CD14-positive monocyte (primary cell): ENCODE measurements at regions of chr1 and their contacts with region 1.

Region 1: DNA sequence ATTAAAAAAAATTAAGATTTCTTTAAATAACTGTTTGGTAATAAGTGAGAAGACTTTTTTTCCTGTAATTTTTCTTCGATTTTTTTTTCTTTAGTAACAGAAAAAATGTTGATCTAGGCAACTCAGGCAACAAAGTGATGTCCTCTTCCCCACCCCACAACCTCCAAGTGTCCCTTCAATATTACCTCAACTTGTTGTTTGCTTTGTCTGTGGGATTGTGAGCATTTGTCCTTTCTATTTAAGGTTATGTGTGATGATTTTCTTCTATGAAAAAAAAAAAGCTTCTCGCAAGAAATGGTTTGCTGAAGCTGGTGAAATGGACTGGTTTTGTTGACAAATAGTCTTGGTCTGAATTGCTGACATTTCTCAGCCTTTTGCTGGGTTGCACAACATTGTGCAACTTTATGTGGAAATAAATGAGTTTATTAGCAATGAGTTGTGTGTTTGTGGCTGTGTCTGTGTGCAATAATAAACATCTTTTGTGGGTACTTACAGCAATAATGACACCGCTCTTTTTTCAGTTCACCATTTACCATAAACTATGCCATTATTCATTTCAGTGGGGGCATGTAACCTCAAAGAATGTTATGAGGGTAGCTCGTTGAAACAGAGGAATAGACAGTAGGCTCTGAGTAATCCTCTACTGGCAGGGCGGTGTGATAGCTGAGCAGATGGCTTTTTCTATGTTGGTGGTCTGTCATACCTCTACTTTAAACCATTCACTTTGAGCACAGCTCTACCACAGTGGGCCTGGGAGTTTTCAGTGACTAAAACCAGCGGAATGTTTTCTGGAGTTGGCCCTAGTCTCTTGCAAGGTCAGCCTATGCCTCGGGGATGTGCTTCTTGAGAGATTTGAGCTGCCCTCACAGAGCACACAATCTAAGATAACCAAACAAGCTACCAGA is 218.5 kb downstream of the HLX start:
- DNase-seq: peak; percentile 95 to 98 (median 97)
- H3K4me3 ChIP-seq: peak overlapping the region in 1 of 3 experiments; percentile 28
- H3K4me3 Mint-ChIP-seq: peak overlapping the region in 1 of 2 donors; percentile 72
- H3K27ac ChIP-seq: peak overlapping the region; percentile 86 to 88
- H3K27ac Mint-ChIP-seq: peak overlapping the region; percentile 88 to 100 (median 98)
- H3K4me1 ChIP-seq: peaks cover 57 to 68% of the 10 kb centered on the region in 2 donors
- H3K4me1 Mint-ChIP-seq: peaks cover 69% of the 10 kb centered on the region
- H3K27me3 ChIP-seq: no peaks in the 10 kb centered on the region
- H3K27me3 Mint-ChIP-seq: peaks cover 4 to 11% (median 9%) of the 10 kb centered on the region in 3 donors
- CTCF ChIP-seq: no peak

Region 2: DNA sequence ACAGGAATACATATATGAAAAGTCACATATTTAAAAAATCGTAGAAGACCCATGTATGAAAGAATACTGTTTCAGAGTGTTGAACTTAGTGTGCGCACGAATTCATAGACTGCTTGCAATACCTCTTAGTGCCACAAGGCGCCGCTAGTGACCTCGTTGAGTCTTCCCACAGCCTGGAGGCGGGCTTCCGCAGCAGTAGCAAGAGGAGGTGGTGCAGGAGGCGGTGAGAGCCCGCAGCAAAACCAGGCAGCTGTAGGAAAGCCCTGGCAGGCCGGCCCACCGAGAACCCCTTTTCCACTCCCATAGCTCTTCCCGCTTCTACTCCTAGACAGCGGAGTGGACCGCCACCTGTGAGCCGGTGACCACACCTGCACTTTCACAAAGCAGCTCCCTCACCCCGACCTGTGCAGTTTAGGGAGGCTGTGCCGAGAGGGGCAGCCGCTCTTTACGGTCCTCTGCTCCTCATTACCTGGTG is 287.5 kb before region 1 on chr1:
- intact Hi-C with region 1: no loop called
- DNase-seq: peak; percentile 58 to 72 (median 67)
- H3K4me3 ChIP-seq: no peak overlapping the region
- H3K4me3 Mint-ChIP-seq: peak overlapping the region; percentile 21 to 41
- H3K27ac ChIP-seq: no peak overlapping the region
- H3K27ac Mint-ChIP-seq: peak overlapping the region in 1 of 7 donors; percentile 27
- H3K4me1 ChIP-seq: no peaks in the 10 kb centered on the region
- H3K4me1 Mint-ChIP-seq: peaks cover 5% of the 10 kb centered on the region
- H3K27me3 ChIP-seq: no peaks in the 10 kb centered on the region
- H3K27me3 Mint-ChIP-seq: peaks cover 0 to 2% (median 0%) of the 10 kb centered on the region in 3 donors
- CTCF ChIP-seq: peak; percentile 99

Region 3: GRCh38 chr1:220879076-220879508 is 218.6 kb before region 1 on chr1 and contains the start of gene HLX:
- intact Hi-C with region 1: loop called (anchors 2 to 5 kb)
- DNase-seq: peak; percentile 85 to 87 (median 86)
- H3K4me3 ChIP-seq: peak within 1 kb of the TSS; percentile 72 to 92 (median 81)
- H3K4me3 Mint-ChIP-seq: peak within 1 kb of the TSS; percentile 99
- H3K27ac ChIP-seq: peak within 1 kb of the TSS; percentile 84 to 91
- H3K27ac Mint-ChIP-seq: peak within 1 kb of the TSS; percentile 93 to 99 (median 97)
- H3K4me1 ChIP-seq: peaks cover 62% of the 10 kb centered on the region in 2 donors
- H3K4me1 Mint-ChIP-seq: peaks cover 69% of the 10 kb centered on the region
- H3K27me3 ChIP-seq: no peaks in the 10 kb centered on the region
- H3K27me3 Mint-ChIP-seq: peaks cover 0 to 9% (median 2%) of the 10 kb centered on the region in 3 donors
- CTCF ChIP-seq: no peak
- polyA plus RNA-seq, gene HLX: 17.1 to 44.0 (median 17.6) TPM

Region 4: GRCh38 chr1:221149111-221149510 is 51.4 kb after region 1 on chr1:
- intact Hi-C with region 1: loop called (anchors 5 to 10 kb)
- DNase-seq: peak; percentile 33 to 71 (median 65)
- H3K4me3 ChIP-seq: peak overlapping the region in 1 of 3 experiments; percentile 26
- H3K4me3 Mint-ChIP-seq: peak overlapping the region in 1 of 2 donors; percentile 55
- H3K27ac ChIP-seq: no peak overlapping the region
- H3K27ac Mint-ChIP-seq: peak overlapping the region in 3 of 7 donors; percentile 50 to 86 (median 85)
- H3K4me1 ChIP-seq: peaks cover 11 to 15% of the 10 kb centered on the region in 2 donors
- H3K4me1 Mint-ChIP-seq: peaks cover 14% of the 10 kb centered on the region
- H3K27me3 ChIP-seq: no peaks in the 10 kb centered on the region
- H3K27me3 Mint-ChIP-seq: peaks cover 0 to 3% (median 2%) of the 10 kb centered on the region in 3 donors
- CTCF ChIP-seq: no peak

Region 5: GRCh38 chr1:221157026-221157761 is 59.5 kb after region 1 on chr1:
- intact Hi-C with region 1: loop called in 1 of 2 experiments (anchors 10 kb)
- DNase-seq: peak; percentile 71 to 91 (median 77)
- H3K4me3 ChIP-seq: peak overlapping the region in 1 of 3 experiments; percentile 2
- H3K4me3 Mint-ChIP-seq: peak overlapping the region in 1 of 2 donors; percentile 78
- H3K27ac ChIP-seq: peak overlapping the region in 1 of 2 donors; percentile 33
- H3K27ac Mint-ChIP-seq: peak overlapping the region; percentile 64 to 95 (median 85)
- H3K4me1 ChIP-seq: peaks cover 36 to 39% of the 10 kb centered on the region in 2 donors
- H3K4me1 Mint-ChIP-seq: peaks cover 40% of the 10 kb centered on the region
- H3K27me3 ChIP-seq: no peaks in the 10 kb centered on the region
- H3K27me3 Mint-ChIP-seq: peaks cover 1 to 5% (median 2%) of the 10 kb centered on the region in 3 donors
- CTCF ChIP-seq: no peak

Region 6: DNA sequence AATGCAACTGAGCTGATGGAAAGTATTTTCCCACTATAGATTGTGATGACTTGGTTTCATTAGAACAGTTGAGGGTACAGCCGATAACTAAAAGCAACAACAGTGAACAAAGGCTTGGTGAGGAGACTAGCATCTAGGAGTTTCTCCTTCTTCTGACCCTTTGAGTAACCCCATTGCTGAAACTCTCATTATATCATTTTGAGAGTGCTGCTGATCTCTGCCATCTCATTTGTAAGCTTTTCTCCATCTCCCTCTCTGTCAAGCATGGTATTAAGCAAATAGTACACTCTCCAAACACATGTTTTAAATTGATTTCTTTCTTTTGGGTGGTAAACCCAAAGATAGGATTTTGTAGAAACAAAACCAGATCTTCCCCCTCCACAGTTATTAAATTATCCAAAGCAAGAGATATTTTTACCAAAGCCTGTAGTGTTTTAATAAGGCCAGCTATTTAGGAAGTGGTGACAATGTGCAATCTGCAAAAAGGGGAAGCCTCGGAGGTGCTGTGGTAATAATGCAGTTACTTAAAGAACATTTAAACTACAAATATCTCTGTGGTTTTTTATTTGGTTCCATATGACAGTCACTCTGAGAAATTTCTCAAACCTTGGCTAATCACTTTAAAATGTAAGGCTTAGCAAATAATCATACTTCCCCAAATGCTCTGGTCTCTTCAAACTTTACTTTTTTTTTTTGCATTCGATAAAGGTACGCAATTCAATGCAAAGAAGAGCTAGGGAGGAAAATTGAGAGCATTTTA is 69.0 kb after region 1 on chr1:
- intact Hi-C with region 1: loop called in 1 of 2 experiments (anchors 5 kb)
- DNase-seq: peak; percentile 88 to 96 (median 91)
- H3K4me3 ChIP-seq: peak overlapping the region in 2 of 3 experiments; percentile 27 to 58
- H3K4me3 Mint-ChIP-seq: peak overlapping the region; percentile 35 to 83
- H3K27ac ChIP-seq: peak overlapping the region in 1 of 2 donors; percentile 76
- H3K27ac Mint-ChIP-seq: peak overlapping the region; percentile 76 to 97 (median 92)
- H3K4me1 ChIP-seq: peaks cover 56 to 80% of the 10 kb centered on the region in 2 donors
- H3K4me1 Mint-ChIP-seq: peaks cover 65% of the 10 kb centered on the region
- H3K27me3 ChIP-seq: peaks cover 0 to 6% of the 10 kb centered on the region in 2 donors
- H3K27me3 Mint-ChIP-seq: peaks cover 6 to 9% (median 6%) of the 10 kb centered on the region in 3 donors
- CTCF ChIP-seq: no peak

Region 7: GRCh38 chr1:221394011-221394544 is 296.3 kb after region 1 on chr1:
- intact Hi-C with region 1: no loop called
- DNase-seq: no peak
- H3K4me3 ChIP-seq: no peak overlapping the region
- H3K4me3 Mint-ChIP-seq: no peak overlapping the region
- H3K27ac ChIP-seq: no peak overlapping the region
- H3K27ac Mint-ChIP-seq: no peak overlapping the region
- H3K4me1 ChIP-seq: no peaks in the 10 kb centered on the region
- H3K4me1 Mint-ChIP-seq: no peaks in the 10 kb centered on the region
- H3K27me3 ChIP-seq: no peaks in the 10 kb centered on the region
- H3K27me3 Mint-ChIP-seq: no peaks in the 10 kb centered on the region
- CTCF ChIP-seq: no peak

Region 8: DNA sequence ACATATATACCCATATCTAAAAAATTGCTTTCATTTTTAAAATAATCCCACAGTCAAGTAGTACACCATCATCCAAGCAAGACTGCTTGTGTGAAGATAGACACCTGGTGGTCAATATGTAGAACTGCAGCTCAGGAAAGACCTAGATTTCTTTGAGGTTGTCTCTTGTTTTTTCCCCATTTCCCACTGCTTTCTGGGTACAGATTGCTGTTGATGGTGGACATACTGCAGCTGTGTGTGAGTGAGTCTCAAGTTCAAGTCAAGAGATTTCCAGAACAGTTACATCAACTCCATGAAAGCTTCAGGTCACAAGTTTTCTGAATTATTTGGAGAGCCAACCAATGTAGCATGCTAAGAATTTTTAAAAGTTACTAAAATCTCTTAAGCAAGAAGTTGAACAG is 337.8 kb after region 1 on chr1:
- intact Hi-C with region 1: loop called in 1 of 2 experiments (anchors 10 kb)
- DNase-seq: peak; percentile 22 to 60 (median 51)
- H3K4me3 ChIP-seq: no peak overlapping the region
- H3K4me3 Mint-ChIP-seq: no peak overlapping the region
- H3K27ac ChIP-seq: no peak overlapping the region
- H3K27ac Mint-ChIP-seq: no peak overlapping the region
- H3K4me1 ChIP-seq: peaks cover 5 to 7% of the 10 kb centered on the region in 2 donors
- H3K4me1 Mint-ChIP-seq: peaks cover 15% of the 10 kb centered on the region
- H3K27me3 ChIP-seq: no peaks in the 10 kb centered on the region
- H3K27me3 Mint-ChIP-seq: peaks cover 0 to 2% (median 1%) of the 10 kb centered on the region in 3 donors
- CTCF ChIP-seq: peak; percentile 98